PC-3 (cell line): ENCODE measurements at regions of chr14 and their contacts with region 1.

Region 1: GRCh38 chr14:66624299-66624937 is 116.5 kb downstream of the GPHN start:
- DNase-seq: peak; percentile 77
- ATAC-seq: peak; percentile 100
- H3K4me3 ChIP-seq: no peak overlapping the region
- H3K27ac ChIP-seq: no peak overlapping the region
- H3K4me1 ChIP-seq: no peaks in the 10 kb centered on the region
- H3K27me3 ChIP-seq: no peaks in the 10 kb centered on the region
- CTCF ChIP-seq: peak; percentile 92

Region 2: DNA sequence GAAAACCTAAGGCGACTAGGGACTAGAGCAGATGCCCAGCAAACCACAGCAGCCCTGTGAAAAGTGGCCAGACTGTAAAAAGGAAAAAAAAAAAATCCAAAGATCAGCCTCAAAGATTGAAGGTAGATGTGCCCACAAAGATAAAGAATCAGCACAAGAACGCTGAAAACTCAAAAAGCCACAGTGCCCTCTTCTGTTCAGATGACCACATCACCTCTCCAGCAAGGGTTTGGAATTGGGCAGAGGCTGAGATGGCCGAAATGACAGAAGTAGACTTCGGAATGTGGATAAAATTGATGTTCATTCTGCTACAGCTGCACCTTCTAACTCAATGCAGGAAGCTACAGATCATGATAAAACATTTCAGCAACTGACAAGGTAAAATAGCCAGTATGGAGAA is 38.0 kb after region 1 on chr14:
- CTCF ChIA-PET with region 1: no interaction called
- POLR2A ChIA-PET with region 1: no interaction called
- intact Hi-C with region 1: loop called (anchors 1 kb)
- DNase-seq: peak; percentile 55
- ATAC-seq: peak; percentile 77
- H3K4me3 ChIP-seq: no peak overlapping the region
- H3K27ac ChIP-seq: no peak overlapping the region
- H3K4me1 ChIP-seq: no peaks in the 10 kb centered on the region
- H3K27me3 ChIP-seq: no peaks in the 10 kb centered on the region
- CTCF ChIP-seq: peak; percentile 72

Region 3: DNA sequence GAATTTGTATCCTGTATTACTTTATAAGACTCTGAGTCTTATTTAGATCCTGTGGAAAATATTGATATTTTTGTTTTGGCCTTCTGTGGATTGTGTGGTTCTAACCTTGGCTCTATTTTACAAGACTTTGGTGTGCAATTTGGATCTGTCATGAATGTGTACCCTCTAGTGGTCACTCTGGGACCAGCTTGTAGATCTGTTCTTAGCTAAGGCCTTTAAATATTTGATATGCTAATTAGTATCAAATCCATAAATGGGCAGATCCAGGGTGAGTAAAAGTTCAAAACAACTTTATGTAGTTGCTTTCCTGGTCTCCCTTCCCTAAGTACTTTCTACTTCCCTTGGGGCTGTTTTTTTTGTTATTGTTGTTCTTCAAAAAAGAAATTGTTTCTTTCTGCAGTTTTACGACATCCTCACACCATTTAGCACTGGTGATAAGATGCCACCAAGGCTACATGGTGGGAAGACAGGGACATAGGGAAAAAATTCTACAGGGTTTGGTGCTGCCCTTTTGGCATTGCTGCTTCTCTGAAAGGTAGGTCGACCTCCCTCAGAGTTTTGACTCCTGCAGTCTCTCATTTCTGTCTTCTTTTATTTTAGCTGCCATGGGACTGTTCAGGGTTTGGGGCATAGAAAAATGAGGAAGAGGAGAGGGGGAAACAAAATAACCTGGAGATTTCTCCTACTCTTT is 122.0 kb after region 1 on chr14:
- CTCF ChIA-PET with region 1: interaction called, 10 read pairs
- POLR2A ChIA-PET with region 1: no interaction called
- intact Hi-C with region 1: loop called (anchors 1 kb)
- DNase-seq: peak; percentile 71
- ATAC-seq: peak; percentile 95
- H3K4me3 ChIP-seq: no peak overlapping the region
- H3K27ac ChIP-seq: no peak overlapping the region
- H3K4me1 ChIP-seq: no peaks in the 10 kb centered on the region
- H3K27me3 ChIP-seq: no peaks in the 10 kb centered on the region
- CTCF ChIP-seq: peak; percentile 90

Region 4: GRCh38 chr14:66868004-66868403 is 243.6 kb after region 1 on chr14:
- CTCF ChIA-PET with region 1: interaction called, 14 read pairs
- POLR2A ChIA-PET with region 1: no interaction called
- intact Hi-C with region 1: loop called (anchors 5 kb)
- DNase-seq: peak; percentile 15
- ATAC-seq: peak; percentile 37
- H3K4me3 ChIP-seq: no peak overlapping the region
- H3K27ac ChIP-seq: no peak overlapping the region
- H3K4me1 ChIP-seq: no peaks in the 10 kb centered on the region
- H3K27me3 ChIP-seq: no peaks in the 10 kb centered on the region
- CTCF ChIP-seq: peak; percentile 45; the same call in 1 of the 2 replicates